Calu3 (cell line): ENCODE measurements at regions of chr1 and their contacts with region 1.

Region 1: GRCh38 chr1:219066631-219067349 is 106.9 kb upstream of the LYPLAL1 start:
- DNase-seq: peak; percentile 35
- H3K4me3 Mint-ChIP-seq: no peak overlapping the region
- H3K27ac Mint-ChIP-seq: peak overlapping the region; percentile 98
- H3K4me1 Mint-ChIP-seq: peaks cover 16% of the 10 kb centered on the region
- H3K27me3 Mint-ChIP-seq: no peaks in the 10 kb centered on the region
- CTCF ChIP-seq: peak; percentile 53

Region 2: DNA sequence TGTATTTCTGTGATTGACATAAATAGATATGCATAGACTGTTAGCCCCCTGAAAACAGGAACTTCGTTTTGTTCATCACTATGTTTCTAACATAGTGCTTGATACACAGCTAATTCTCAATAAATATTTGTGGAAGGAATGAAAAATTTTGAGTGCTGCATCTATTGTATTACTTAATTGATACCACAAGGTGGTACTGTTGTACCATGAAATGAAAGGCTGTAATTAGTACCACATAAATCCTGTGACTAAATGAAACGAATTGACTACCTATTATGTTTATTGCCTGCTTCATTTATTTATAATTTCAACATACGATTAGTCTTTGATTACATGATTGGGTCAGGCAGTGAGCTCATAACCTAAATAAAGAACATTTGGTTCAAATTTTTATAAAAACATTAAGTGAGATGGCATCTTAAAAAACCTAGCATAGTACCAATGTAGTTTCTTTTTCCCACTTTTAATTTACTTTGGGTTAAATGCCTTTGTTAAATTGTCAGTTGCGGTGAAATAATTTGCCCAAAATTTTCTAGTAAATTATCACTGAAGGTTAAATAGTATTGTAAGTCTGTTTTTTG is 736.7 kb before region 1 on chr1:
- CTCF ChIA-PET with region 1: no interaction called
- intact Hi-C with region 1: loop called (anchors 2 kb)
- DNase-seq: no peak
- H3K4me3 Mint-ChIP-seq: no peak overlapping the region
- H3K27ac Mint-ChIP-seq: peak overlapping the region; percentile 36
- H3K4me1 Mint-ChIP-seq: no peaks in the 10 kb centered on the region
- H3K27me3 Mint-ChIP-seq: no peaks in the 10 kb centered on the region
- CTCF ChIP-seq: peak; percentile 52

Region 3: GRCh38 chr1:218397752-218398339 is 668.9 kb before region 1 on chr1:
- CTCF ChIA-PET with region 1: interaction called, 11 read pairs
- intact Hi-C with region 1: no loop called
- DNase-seq: peak; percentile 82
- H3K4me3 Mint-ChIP-seq: peak overlapping the region; percentile 26
- H3K27ac Mint-ChIP-seq: peak overlapping the region; percentile 71
- H3K4me1 Mint-ChIP-seq: peaks cover 40% of the 10 kb centered on the region
- H3K27me3 Mint-ChIP-seq: no peaks in the 10 kb centered on the region
- CTCF ChIP-seq: no peak

Region 4: GRCh38 chr1:218705911-218706893 is 360.6 kb before region 1 on chr1:
- CTCF ChIA-PET with region 1: interaction called, 21 read pairs
- intact Hi-C with region 1: loop called (anchors 1 kb)
- DNase-seq: peak; percentile 82
- H3K4me3 Mint-ChIP-seq: peak overlapping the region; percentile 17
- H3K27ac Mint-ChIP-seq: peak overlapping the region; percentile 96
- H3K4me1 Mint-ChIP-seq: peaks cover 62% of the 10 kb centered on the region
- H3K27me3 Mint-ChIP-seq: no peaks in the 10 kb centered on the region
- CTCF ChIP-seq: no peak

Region 5: GRCh38 chr1:218823291-218823900 is 243.4 kb before region 1 on chr1:
- CTCF ChIA-PET with region 1: no interaction called
- intact Hi-C with region 1: loop called (anchors 2 kb)
- DNase-seq: peak; percentile 19
- H3K4me3 Mint-ChIP-seq: no peak overlapping the region
- H3K27ac Mint-ChIP-seq: peak overlapping the region; percentile 77
- H3K4me1 Mint-ChIP-seq: peaks cover 57% of the 10 kb centered on the region
- H3K27me3 Mint-ChIP-seq: no peaks in the 10 kb centered on the region
- CTCF ChIP-seq: no peak

Region 6: GRCh38 chr1:218996362-218996761 is 70.4 kb before region 1 on chr1:
- CTCF ChIA-PET with region 1: no interaction called
- intact Hi-C with region 1: no loop called
- DNase-seq: no peak
- H3K4me3 Mint-ChIP-seq: no peak overlapping the region
- H3K27ac Mint-ChIP-seq: no peak overlapping the region
- H3K4me1 Mint-ChIP-seq: peaks cover 18% of the 10 kb centered on the region
- H3K27me3 Mint-ChIP-seq: no peaks in the 10 kb centered on the region
- CTCF ChIP-seq: no peak

Region 7: DNA sequence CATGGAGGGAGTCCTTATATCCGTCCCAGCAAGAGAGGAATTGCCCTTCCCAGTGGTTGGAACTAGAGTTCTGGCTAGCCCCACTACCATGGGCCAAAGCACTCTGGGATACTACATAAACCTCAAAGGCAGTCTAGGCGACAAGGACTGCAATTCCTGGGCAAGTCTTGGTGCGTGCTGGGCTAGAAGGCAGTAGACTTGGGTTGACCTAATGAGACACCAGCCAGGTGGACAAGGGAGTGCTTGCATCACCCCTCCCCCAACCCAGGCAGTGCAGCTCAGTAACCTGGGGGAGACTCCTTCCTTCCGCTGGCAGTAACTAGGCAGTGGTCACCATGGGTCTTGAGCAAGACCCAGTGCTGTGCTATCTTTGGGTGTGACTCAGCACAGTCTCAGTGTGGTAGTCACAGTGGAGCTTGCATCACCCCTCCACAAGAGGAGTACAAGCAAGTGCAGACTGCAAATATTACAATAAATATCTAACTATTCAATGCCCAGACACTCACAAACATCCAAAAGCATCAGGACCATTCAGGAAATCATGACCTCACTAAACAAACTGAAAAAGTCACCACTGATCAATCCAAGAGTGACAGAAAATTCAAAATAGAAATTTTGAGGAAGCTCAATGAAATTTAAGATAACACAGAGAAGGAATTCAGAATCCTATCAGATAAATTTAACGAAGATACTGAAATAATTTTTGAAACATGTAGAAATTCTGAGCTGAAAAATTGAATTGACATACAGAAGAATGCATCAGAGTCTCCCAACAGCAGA is 22.2 kb after region 1 on chr1:
- CTCF ChIA-PET with region 1: interaction called, 10 read pairs
- intact Hi-C with region 1: no loop called
- DNase-seq: peak; percentile 84
- H3K4me3 Mint-ChIP-seq: peak overlapping the region; percentile 33
- H3K27ac Mint-ChIP-seq: peak overlapping the region; percentile 93
- H3K4me1 Mint-ChIP-seq: peaks cover 40% of the 10 kb centered on the region
- H3K27me3 Mint-ChIP-seq: no peaks in the 10 kb centered on the region
- CTCF ChIP-seq: no peak

Region 8: DNA sequence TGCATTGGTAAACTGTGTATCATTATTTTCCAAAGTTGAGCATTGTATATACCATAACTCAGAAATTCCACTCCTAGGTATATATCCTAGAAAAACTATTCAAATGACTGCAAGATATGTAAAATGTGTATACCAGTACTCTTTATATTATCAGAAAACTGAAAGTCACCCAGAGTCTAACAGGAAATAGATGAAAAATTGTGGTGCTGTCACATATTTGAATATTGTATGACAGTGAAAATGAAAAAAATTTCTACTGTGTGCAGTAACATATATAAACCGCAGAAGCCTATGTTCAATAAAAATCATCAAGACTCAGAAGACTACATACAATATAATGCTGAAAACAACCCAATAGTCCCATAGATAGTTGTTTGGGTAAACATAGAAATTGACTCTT is 32.5 kb after region 1 on chr1:
- CTCF ChIA-PET with region 1: no interaction called
- intact Hi-C with region 1: no loop called
- DNase-seq: no peak
- H3K4me3 Mint-ChIP-seq: no peak overlapping the region
- H3K27ac Mint-ChIP-seq: no peak overlapping the region
- H3K4me1 Mint-ChIP-seq: peaks cover 9% of the 10 kb centered on the region
- H3K27me3 Mint-ChIP-seq: no peaks in the 10 kb centered on the region
- CTCF ChIP-seq: no peak